Panc1 (cell line): ENCODE measurements at regions of chr1 and their contacts with region 1.

Region 1: GRCh38 chr1:117128323-117129079 is 7.0 kb upstream of the TRIM45 start:
- DNase-seq: no peak
- ATAC-seq: no peak
- H3K4me3 ChIP-seq: no peak overlapping the region
- H3K27ac ChIP-seq: no peak overlapping the region
- H3K4me1 ChIP-seq: no peaks in the 10 kb centered on the region
- H3K27me3 ChIP-seq: peaks cover 2% of the 10 kb centered on the region; the same call in 1 of the 2 replicates
- CTCF ChIP-seq: peak; percentile 56

Region 2: GRCh38 chr1:117284399-117285215 is 156.1 kb after region 1 on chr1:
- CTCF ChIA-PET with region 1: interaction called, 3 read pairs
- POLR2A ChIA-PET with region 1: no interaction called
- in situ Hi-C with region 1: no loop called
- intact Hi-C with region 1: loop called (anchors 5 kb)
- DNase-seq: peak; percentile 17
- ATAC-seq: peak; percentile 80
- H3K4me3 ChIP-seq: no peak overlapping the region
- H3K27ac ChIP-seq: no peak overlapping the region
- H3K4me1 ChIP-seq: no peaks in the 10 kb centered on the region
- H3K27me3 ChIP-seq: no peaks in the 10 kb centered on the region
- CTCF ChIP-seq: peak; percentile 60